Activated naive CD4-positive, alpha-beta T cell treated with anti-CD3 and anti-CD28 coated beads for 36 hours (primary cell): ENCODE measurements at regions of chr2 and their contacts with region 1.

Region 1: GRCh38 chr2:102020596-102021181 is 28.9 kb downstream of the IL1R2 start:
- DNase-seq: peak; percentile 93
- H3K4me3 Mint-ChIP-seq: no peak overlapping the region
- H3K27ac Mint-ChIP-seq: no peak overlapping the region
- H3K4me1 Mint-ChIP-seq: peaks cover 25% of the 10 kb centered on the region
- H3K27me3 Mint-ChIP-seq: no peaks in the 10 kb centered on the region

Region 2: GRCh38 chr2:100893392-100894089 is 1127.1 kb before region 1 on chr2:
- CTCF ChIA-PET with region 1: no interaction called
- intact Hi-C with region 1: no loop called
- DNase-seq: no peak
- H3K4me3 Mint-ChIP-seq: no peak overlapping the region
- H3K27ac Mint-ChIP-seq: no peak overlapping the region
- H3K4me1 Mint-ChIP-seq: peaks cover 2% of the 10 kb centered on the region
- H3K27me3 Mint-ChIP-seq: no peaks in the 10 kb centered on the region

Region 3: DNA sequence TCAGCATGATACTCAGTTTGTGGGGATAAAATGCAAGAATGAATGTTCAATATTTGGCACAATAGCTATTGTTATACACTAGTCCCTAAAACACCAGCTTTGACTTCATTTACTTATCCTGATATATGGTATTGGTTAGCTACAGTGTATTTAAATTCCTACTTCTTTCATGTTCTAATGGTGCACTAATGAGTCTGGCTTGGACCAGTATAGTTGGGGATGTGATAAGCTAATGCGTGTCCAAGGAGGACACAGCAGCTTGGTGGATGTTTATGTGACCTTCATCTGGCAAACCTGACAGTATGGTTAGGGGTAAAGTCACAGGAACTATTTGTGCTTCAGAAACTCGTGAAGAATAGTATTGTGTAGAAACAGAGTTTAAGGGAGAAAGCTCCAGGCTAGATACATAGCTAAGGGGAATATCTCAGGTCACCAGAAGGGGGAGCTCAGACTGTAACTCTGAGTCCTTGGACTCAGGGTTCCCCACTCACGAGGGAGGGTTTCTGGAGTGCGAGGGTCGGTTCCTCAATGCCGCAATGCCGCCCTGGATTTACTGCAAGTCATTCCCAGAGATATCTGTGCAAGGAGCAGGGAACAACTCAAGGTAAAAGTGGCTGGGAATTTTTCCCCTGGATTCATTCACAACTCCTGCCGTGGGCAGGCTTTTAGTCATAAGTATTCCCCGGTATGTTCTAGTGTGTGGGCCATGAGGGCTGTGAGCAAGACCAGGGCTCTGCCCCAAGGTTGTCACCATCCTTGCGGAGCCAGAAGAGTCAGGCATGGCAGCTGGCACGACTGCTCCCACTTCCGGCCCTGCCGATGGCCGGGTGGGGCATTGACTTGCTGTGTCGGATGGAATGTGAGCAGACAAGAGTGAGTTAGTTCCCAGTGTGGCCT is 14.5 kb before region 1 on chr2:
- CTCF ChIA-PET with region 1: interaction called, 37 read pairs
- intact Hi-C with region 1: no loop called
- DNase-seq: peak; percentile 68
- H3K4me3 Mint-ChIP-seq: no peak overlapping the region
- H3K27ac Mint-ChIP-seq: no peak overlapping the region
- H3K4me1 Mint-ChIP-seq: peaks cover 19% of the 10 kb centered on the region
- H3K27me3 Mint-ChIP-seq: no peaks in the 10 kb centered on the region

Region 4: DNA sequence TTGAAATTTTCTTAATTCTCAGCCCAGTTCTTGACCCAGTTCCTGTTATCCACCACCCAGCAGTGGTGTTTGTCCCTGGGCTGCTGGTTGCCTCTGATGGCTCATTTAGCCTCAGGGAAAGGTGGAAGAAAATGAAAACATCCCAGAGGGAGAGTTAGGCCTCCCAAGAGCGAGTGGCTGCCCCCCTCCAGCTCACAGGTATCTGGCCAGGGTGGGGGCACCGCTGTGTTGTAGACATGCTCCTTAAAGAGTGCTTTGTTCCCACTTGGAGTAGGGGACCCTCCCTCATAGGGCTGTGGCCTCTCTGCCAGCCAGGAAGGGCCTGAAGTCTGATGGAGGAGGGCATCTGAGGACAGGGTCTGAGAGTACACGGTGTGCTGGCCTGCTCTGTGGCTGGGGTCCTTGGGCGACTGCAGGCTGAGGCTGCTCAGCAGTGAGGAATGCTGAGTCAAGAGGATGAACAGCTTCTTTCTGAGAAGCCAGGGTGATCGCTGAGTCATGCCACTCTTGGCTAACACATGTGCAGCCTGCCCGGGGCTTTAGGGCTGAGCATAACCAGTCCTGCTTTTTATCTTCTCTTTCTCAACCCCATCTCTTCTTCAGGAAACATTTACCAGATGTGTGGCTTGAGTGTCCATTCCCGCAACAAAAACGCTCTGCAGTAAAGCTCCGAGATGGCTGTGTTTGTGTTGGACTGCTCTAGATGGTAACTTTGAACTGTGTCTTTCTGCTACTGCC is 43.4 kb after region 1 on chr2:
- CTCF ChIA-PET with region 1: interaction called, 11 read pairs
- intact Hi-C with region 1: no loop called
- DNase-seq: peak; percentile 73
- H3K4me3 Mint-ChIP-seq: no peak overlapping the region
- H3K27ac Mint-ChIP-seq: peak overlapping the region; percentile 44
- H3K4me1 Mint-ChIP-seq: peaks cover 27% of the 10 kb centered on the region
- H3K27me3 Mint-ChIP-seq: no peaks in the 10 kb centered on the region

Region 5: GRCh38 chr2:102166189-102166845 is 145.6 kb after region 1 on chr2:
- CTCF ChIA-PET with region 1: interaction called, 25 read pairs
- intact Hi-C with region 1: loop called (anchors 1 kb)
- DNase-seq: peak; percentile 57
- H3K4me3 Mint-ChIP-seq: no peak overlapping the region
- H3K27ac Mint-ChIP-seq: no peak overlapping the region
- H3K4me1 Mint-ChIP-seq: peaks cover 9% of the 10 kb centered on the region
- H3K27me3 Mint-ChIP-seq: no peaks in the 10 kb centered on the region

Region 6: GRCh38 chr2:102449370-102449974 is 428.8 kb after region 1 on chr2:
- CTCF ChIA-PET with region 1: interaction called, 4 read pairs
- intact Hi-C with region 1: loop called (anchors 1 kb)
- DNase-seq: peak; percentile 86
- H3K4me3 Mint-ChIP-seq: no peak overlapping the region
- H3K27ac Mint-ChIP-seq: no peak overlapping the region
- H3K4me1 Mint-ChIP-seq: peaks cover 2% of the 10 kb centered on the region
- H3K27me3 Mint-ChIP-seq: no peaks in the 10 kb centered on the region